ENCODE measurements at regions of chr12 and their contacts with region 1.

Region 1: GRCh38 chr12:109987615-109988014 is 8.6 kb downstream of the GIT2 start:
- DNase-seq: peak; percentile 69
- H3K4me3 Mint-ChIP-seq: no peak overlapping the region
- H3K27ac Mint-ChIP-seq: peak overlapping the region; percentile 84
- H3K4me1 Mint-ChIP-seq: peaks cover 61% of the 10 kb centered on the region
- H3K27me3 Mint-ChIP-seq: no peaks in the 10 kb centered on the region

Region 2: GRCh38 chr12:109972821-109973220 is 14.8 kb before region 1 on chr12:
- CTCF ChIA-PET with region 1: no interaction called
- intact Hi-C with region 1: loop called (anchors 1 kb)
- DNase-seq: no peak
- H3K4me3 Mint-ChIP-seq: no peak overlapping the region
- H3K27ac Mint-ChIP-seq: no peak overlapping the region
- H3K4me1 Mint-ChIP-seq: peaks cover 23% of the 10 kb centered on the region
- H3K27me3 Mint-ChIP-seq: no peaks in the 10 kb centered on the region

Measured in activated naive CD4-positive, alpha-beta T cell treated with anti-CD3 and anti-CD28 coated beads for 36 hours (primary cell).